H1 (cell line): ENCODE measurements at regions of chr11 and their contacts with region 1.

Region 1: DNA sequence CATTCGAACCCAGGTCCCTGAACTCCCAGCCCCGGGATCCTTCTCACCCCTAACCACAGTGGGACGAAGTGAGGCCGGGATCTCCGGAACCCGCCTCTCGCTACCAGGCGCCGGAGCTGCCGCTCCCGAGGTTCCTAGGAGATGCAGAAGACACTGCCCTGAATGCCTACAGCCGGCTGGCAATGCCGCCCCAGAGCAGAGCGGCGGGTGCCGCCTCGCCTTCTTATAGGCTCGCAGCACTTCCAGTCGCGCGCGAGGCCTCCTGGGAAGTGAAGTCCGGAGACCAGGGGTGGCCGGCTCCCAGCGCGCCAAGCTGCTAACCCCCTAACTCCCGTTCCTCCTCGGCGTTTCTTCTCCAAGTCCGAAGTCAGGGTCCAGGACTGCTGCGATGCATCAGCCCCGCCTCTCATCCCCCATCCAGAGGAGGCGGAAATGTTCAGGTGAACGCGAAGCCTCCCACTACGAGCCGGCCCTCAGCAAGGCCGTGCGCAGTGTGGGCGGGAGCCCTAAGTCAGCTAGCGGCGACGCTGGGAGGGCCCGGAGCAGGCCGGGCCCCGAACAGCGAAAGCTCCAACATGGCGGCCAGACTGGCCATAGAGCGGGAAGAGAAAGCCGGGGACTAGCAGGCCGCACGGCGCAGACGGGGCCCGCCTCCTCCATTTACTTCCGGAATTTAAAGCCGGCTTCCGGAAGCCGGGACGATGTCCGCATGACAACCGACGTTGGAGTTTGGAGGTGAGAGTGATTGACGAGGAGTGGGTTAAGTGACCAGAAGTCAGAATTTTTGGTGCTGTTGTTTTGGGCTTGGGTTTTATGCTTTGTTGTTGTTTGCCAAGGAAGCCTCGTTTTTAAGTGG is at the starts of genes CYB561A3 and TMEM138:
- DNase-seq: peak; percentile 78 to 90
- H3K4me3 ChIP-seq: peak within 1 kb of the TSS; percentile 77 to 100 (median 86)
- H3K27ac ChIP-seq: peak within 1 kb of the TSS; percentile 100
- H3K4me1 ChIP-seq: no peaks in the 10 kb centered on the region
- H3K27me3 ChIP-seq: no peaks in the 10 kb centered on the region
- CTCF ChIP-seq: peak in 1 of 3 experiments; percentile 1; a peak in 1 of 4 replicates
- EP300 ChIP-seq: no peak
- POLR2A ChIP-seq: peak; percentile 94 to 99
- RAD21 ChIP-seq: no peak
- total RNA-seq, gene CYB561A3: 29.6 and 32.5 TPM in 2 replicates
- total RNA-seq, gene TMEM138: 32.9 and 35.3 TPM in 2 replicates

Region 2: DNA sequence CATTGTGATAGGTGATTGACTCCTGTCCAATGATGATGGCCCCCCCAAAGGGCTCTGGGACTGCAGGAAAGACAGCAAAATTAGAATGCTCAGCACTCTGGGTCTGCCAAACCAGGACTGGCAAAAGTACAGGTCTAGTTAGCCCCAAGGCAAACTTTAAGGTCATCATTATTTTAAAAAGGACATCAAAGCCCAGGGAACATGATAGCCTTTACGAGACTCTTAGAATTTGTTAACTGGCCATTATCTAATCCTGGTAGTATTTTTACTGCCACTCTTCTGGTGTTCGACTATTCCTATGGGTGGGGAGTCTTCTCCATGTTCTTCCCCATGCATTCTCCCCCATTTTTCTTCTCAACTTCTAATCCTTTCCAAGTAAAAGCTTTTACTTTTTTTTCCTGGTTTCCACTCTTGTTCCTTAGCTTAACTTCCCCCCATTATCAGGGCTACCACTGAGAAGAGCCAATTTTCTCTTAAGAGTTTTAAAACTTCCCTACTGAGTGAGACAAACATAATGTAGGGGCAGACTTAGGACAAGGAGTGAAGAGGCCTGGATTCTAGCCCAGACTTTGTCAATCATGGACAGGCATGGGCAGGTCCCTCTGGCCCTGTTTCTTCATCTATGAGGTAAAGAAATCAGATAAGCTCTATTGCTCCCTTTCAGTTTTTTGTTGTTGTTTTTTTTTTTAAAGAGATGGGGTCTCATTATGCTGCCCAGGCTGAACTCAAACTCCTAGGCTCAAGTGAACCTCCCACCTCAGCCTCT is 36.1 kb before region 1 on chr11:
- CTCF ChIA-PET with region 1: interaction called, 3 read pairs
- POLR2A ChIA-PET with region 1: interaction called, 50 read pairs
- DNase-seq: no peak
- H3K4me3 ChIP-seq: no peak overlapping the region
- H3K27ac ChIP-seq: no peak overlapping the region
- H3K4me1 ChIP-seq: no peaks in the 10 kb centered on the region
- H3K27me3 ChIP-seq: no peaks in the 10 kb centered on the region
- CTCF ChIP-seq: no peak
- EP300 ChIP-seq: no peak
- POLR2A ChIP-seq: no peak
- RAD21 ChIP-seq: no peak

Region 3: GRCh38 chr11:61375761-61376108 is 13.8 kb after region 1 on chr11:
- CTCF ChIA-PET with region 1: interaction called, 199 read pairs
- POLR2A ChIA-PET with region 1: interaction called, 1,106 read pairs
- DNase-seq: no peak
- H3K4me3 ChIP-seq: no peak overlapping the region
- H3K27ac ChIP-seq: no peak overlapping the region
- H3K4me1 ChIP-seq: no peaks in the 10 kb centered on the region
- H3K27me3 ChIP-seq: no peaks in the 10 kb centered on the region
- CTCF ChIP-seq: no peak
- EP300 ChIP-seq: no peak
- POLR2A ChIP-seq: no peak
- RAD21 ChIP-seq: no peak

Region 4: DNA sequence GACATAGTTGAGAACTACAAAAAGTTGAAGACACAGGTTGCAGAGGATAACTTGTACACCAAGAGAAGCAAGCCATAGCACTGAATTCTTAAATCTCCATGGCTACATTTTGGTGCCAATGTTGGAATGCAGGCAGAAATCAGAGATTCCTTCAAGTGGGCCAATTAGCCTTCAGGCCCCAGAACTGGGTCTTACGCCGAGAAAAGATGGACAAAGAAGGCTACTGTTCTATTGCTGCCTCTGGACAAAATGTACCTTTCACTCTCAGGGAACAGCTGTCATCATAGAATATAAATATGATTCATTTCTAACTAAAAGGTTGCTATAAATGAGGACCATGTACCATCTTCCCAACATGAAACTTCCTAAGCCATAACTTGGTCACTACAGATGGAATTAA is 44.2 kb after region 1 on chr11:
- CTCF ChIA-PET with region 1: no interaction called
- POLR2A ChIA-PET with region 1: interaction called, 33 read pairs
- DNase-seq: no peak
- H3K4me3 ChIP-seq: no peak overlapping the region
- H3K27ac ChIP-seq: no peak overlapping the region
- H3K4me1 ChIP-seq: no peaks in the 10 kb centered on the region
- H3K27me3 ChIP-seq: no peaks in the 10 kb centered on the region
- CTCF ChIP-seq: no peak
- EP300 ChIP-seq: no peak
- POLR2A ChIP-seq: no peak
- RAD21 ChIP-seq: no peak